ENCODE measurements at regions of chr21 and their contacts with region 1.

Region 1: GRCh38 chr21:29372063-29372802 is 73.5 kb downstream of the BACH1 start:
- DNase-seq: peak; percentile 33
- ATAC-seq: peak; percentile 89 to 91

Region 2: GRCh38 chr21:29085106-29085752 is 287.0 kb before region 1 on chr21:
- intact Hi-C with region 1: loop called (anchors 2 to 5 kb)
- DNase-seq: no peak
- ATAC-seq: no peak

Region 3: DNA sequence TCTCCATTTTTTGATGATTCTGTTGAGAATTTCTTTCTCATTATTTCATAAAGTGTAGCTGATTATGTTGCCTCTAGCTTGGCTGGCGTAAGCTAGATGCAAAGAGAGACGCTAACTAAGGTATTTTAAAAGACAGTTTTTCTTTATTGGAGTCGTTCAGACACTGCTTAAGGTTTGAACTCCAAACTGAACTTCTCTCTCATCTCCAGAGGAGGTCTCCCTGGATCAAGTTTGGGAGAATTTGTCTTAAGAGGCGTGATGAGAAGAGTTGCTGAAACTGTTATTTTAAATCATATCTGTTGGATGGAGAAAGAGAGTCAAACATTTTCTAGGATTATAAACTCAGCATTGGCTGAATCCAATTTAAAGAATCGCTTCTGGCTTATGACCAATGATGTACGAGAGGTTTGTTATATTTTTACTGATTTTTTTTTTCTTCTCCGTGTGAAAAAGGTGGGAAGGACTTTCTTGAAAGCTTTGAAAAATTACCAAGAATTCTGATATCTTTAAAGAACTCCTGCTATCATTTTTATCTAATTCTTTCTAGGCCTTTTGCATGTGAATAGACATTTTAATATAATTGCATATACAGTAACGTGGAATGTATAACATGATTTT is 207.8 kb before region 1 on chr21:
- intact Hi-C with region 1: loop called (anchors 1 to 10 kb)
- DNase-seq: no peak
- ATAC-seq: peak; percentile 74 to 89

Region 4: GRCh38 chr21:29318354-29318753 is 53.9 kb before region 1 on chr21:
- intact Hi-C with region 1: no loop called
- DNase-seq: no peak
- ATAC-seq: peak in 1 of 2 donors; percentile 24

Measured in left cardiac atrium (tissue), 4 donors.